Heart right ventricle (tissue), 16 donors: ENCODE measurements at regions of chr2 and their contacts with region 1.

Region 1: GRCh38 chr2:43018179-43019024 is 208.0 kb downstream of the ZFP36L2 start:
- DNase-seq: peak; percentile 66 to 79
- ATAC-seq: peak; percentile 62 to 92 (median 87)
- H3K4me3 ChIP-seq: no peak overlapping the region
- H3K27ac ChIP-seq: peak overlapping the region; percentile 59 to 89 (median 79)
- H3K4me1 ChIP-seq: peaks cover 0 to 42% (median 22%) of the 10 kb centered on the region in 9 donors
- H3K27me3 ChIP-seq: no peaks in the 10 kb centered on the region
- CTCF ChIP-seq: no peak

Region 2: GRCh38 chr2:43537137-43537536 is 518.7 kb after region 1 on chr2:
- intact Hi-C with region 1: loop called in 1 of 10 experiments (anchors 10 kb)
- DNase-seq: no peak
- ATAC-seq: no peak
- H3K4me3 ChIP-seq: no peak overlapping the region
- H3K27ac ChIP-seq: peak overlapping the region in 1 of 10 donors; percentile 17
- H3K4me1 ChIP-seq: peaks cover 0 to 50% (median 0%) of the 10 kb centered on the region in 9 donors
- H3K27me3 ChIP-seq: no peaks in the 10 kb centered on the region
- CTCF ChIP-seq: no peak